ENCODE measurements at regions of chr4 and their contacts with region 1.

Region 1: GRCh38 chr4:13654158-13654797 is 26.8 kb upstream of the BOD1L1 start:
- DNase-seq: peak; percentile 82
- H3K4me3 Mint-ChIP-seq: peak overlapping the region; percentile 68
- H3K27ac Mint-ChIP-seq: no peak overlapping the region
- H3K4me1 Mint-ChIP-seq: peaks cover 12% of the 10 kb centered on the region
- H3K27me3 Mint-ChIP-seq: no peaks in the 10 kb centered on the region
- CTCF ChIP-seq: peak; percentile 45

Region 2: GRCh38 chr4:13733817-13734216 is 79.5 kb after region 1 on chr4:
- CTCF ChIA-PET with region 1: no interaction called
- intact Hi-C with region 1: no loop called
- DNase-seq: no peak
- H3K4me3 Mint-ChIP-seq: no peak overlapping the region
- H3K27ac Mint-ChIP-seq: no peak overlapping the region
- H3K4me1 Mint-ChIP-seq: no peaks in the 10 kb centered on the region
- H3K27me3 Mint-ChIP-seq: no peaks in the 10 kb centered on the region
- CTCF ChIP-seq: no peak

Region 3: GRCh38 chr4:13907255-13907751 is 253.0 kb after region 1 on chr4:
- CTCF ChIA-PET with region 1: interaction called, 8 read pairs
- intact Hi-C with region 1: loop called (anchors 1 kb)
- DNase-seq: peak; percentile 43
- H3K4me3 Mint-ChIP-seq: peak overlapping the region; percentile 39
- H3K27ac Mint-ChIP-seq: peak overlapping the region; percentile 89
- H3K4me1 Mint-ChIP-seq: peaks cover 22% of the 10 kb centered on the region
- H3K27me3 Mint-ChIP-seq: no peaks in the 10 kb centered on the region
- CTCF ChIP-seq: peak; percentile 15

Region 4: GRCh38 chr4:14254252-14254651 is 600.0 kb after region 1 on chr4:
- CTCF ChIA-PET with region 1: no interaction called
- intact Hi-C with region 1: loop called (anchors 10 kb)
- DNase-seq: peak; percentile 46
- H3K4me3 Mint-ChIP-seq: no peak overlapping the region
- H3K27ac Mint-ChIP-seq: no peak overlapping the region
- H3K4me1 Mint-ChIP-seq: no peaks in the 10 kb centered on the region
- H3K27me3 Mint-ChIP-seq: no peaks in the 10 kb centered on the region
- CTCF ChIP-seq: no peak

Region 5: DNA sequence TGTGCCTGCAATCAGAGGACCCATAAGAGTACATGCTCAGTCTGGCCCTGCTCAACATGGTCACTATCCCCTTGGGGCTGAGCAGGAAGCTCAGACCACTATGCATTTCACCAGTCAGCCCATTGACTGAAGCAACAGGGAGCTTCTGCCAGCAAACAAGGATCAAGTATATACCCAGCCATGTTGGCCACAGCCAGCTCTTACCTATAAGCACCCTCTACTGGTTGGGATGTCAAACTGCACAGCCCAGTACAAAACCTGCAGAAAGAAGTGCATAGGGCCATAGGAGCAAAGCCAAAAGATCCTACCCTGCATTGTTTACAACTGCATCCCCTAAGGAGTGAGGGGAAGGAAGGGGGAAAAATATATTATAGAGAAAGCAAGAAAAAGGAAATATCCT is 1133.6 kb after region 1 on chr4:
- CTCF ChIA-PET with region 1: no interaction called
- intact Hi-C with region 1: loop called (anchors 10 kb)
- DNase-seq: peak; percentile 4
- H3K4me3 Mint-ChIP-seq: no peak overlapping the region
- H3K27ac Mint-ChIP-seq: no peak overlapping the region
- H3K4me1 Mint-ChIP-seq: no peaks in the 10 kb centered on the region
- H3K27me3 Mint-ChIP-seq: no peaks in the 10 kb centered on the region
- CTCF ChIP-seq: peak; percentile 35

Region 6: GRCh38 chr4:15162465-15163283 is 1508.4 kb after region 1 on chr4:
- CTCF ChIA-PET with region 1: no interaction called
- intact Hi-C with region 1: loop called (anchors 10 kb)
- DNase-seq: no peak
- H3K4me3 Mint-ChIP-seq: no peak overlapping the region
- H3K27ac Mint-ChIP-seq: no peak overlapping the region
- H3K4me1 Mint-ChIP-seq: no peaks in the 10 kb centered on the region
- H3K27me3 Mint-ChIP-seq: no peaks in the 10 kb centered on the region
- CTCF ChIP-seq: no peak